Left ventricle myocardium inferior (tissue), 1 donor: ENCODE measurements at regions of chr6 and their contacts with region 1.

Region 1: DNA sequence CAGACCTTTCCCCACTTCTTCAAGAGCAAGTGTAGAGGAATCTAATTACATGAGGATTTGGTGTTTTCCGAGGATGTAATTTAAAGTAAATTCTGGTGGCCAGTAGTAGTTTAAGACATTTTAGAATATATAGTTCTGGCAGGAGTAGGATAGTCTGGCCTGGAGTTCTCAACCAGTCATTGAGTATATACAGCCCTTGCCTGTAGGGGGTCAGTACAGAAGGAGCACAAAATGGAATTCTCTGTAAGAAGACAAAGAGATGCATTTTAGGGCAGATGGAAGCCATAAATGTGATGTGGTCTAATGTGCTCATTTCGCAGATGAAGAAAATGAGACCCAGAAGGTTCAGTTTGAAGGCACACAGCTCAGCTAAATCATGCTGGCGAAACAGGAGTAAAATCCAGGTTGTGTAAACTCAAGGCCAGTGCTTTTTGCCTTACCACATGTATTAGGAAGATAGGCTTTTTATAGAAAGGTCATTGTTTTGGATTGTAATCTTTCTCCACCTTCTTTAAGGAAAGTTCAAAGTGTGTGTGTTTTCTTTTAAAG is 29.5 kb downstream of the QKI start:
- DNase-seq: no peak
- H3K4me3 ChIP-seq: peak overlapping the region; percentile 0
- H3K27ac ChIP-seq: peak overlapping the region; percentile 10
- H3K4me1 ChIP-seq: peaks cover 100% of the 10 kb centered on the region
- H3K27me3 ChIP-seq: no peaks in the 10 kb centered on the region
- CTCF ChIP-seq: no peak

Region 2: GRCh38 chr6:163309491-163310026 is 134.5 kb before region 1 on chr6:
- intact Hi-C with region 1: no loop called
- DNase-seq: no peak
- H3K4me3 ChIP-seq: no peak overlapping the region
- H3K27ac ChIP-seq: no peak overlapping the region
- H3K4me1 ChIP-seq: peaks cover 13% of the 10 kb centered on the region
- H3K27me3 ChIP-seq: no peaks in the 10 kb centered on the region
- CTCF ChIP-seq: no peak

Region 3: GRCh38 chr6:163554663-163555062 is 110.6 kb after region 1 on chr6:
- intact Hi-C with region 1: loop called (anchors 10 kb)
- DNase-seq: peak; percentile 51
- H3K4me3 ChIP-seq: no peak overlapping the region
- H3K27ac ChIP-seq: peak overlapping the region; percentile 13
- H3K4me1 ChIP-seq: peaks cover 83% of the 10 kb centered on the region
- H3K27me3 ChIP-seq: no peaks in the 10 kb centered on the region
- CTCF ChIP-seq: peak; percentile 55